Activated CD4-positive, alpha-beta memory T cell treated with anti-CD3 and anti-CD28 coated beads for 36 hours (primary cell): ENCODE measurements at regions of chr1 and their contacts with region 1.

Region 1: DNA sequence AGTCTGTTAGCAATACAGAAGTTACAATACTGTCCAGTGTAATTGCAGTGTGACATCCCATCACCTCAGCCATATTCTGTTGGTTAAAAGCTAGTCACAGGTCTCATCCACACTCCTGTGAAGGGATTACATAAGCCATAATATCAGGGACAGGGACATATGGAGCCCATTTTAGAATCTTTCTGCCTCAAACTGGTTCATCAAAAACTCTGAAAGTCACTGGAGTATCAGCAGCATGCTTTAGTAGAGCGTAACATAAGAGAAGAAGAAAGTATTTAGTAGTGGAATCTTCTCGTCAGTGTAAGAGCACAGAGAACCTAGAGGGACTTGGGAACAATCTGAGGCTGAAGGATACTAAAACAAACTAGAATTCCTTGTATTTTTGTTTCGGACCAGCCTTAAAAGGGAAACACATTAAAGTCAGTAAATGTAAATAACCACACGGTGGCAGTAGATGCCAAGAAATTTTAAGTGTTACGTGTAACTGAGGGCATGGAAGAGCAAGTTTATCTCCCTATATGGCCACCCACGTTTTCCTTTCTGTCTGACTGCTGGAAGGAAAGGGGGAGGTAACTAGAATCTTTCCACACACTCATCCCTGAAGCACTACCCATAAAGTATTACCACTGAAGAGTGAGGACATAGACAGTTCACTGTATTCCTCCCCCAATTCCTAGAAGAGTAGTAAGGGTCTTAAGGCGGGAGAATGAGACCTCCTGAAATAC is 41.6 kb upstream of the AGL start:
- DNase-seq: peak; percentile 22
- H3K4me3 Mint-ChIP-seq: peak overlapping the region; percentile 43
- H3K27ac Mint-ChIP-seq: no peak overlapping the region
- H3K4me1 Mint-ChIP-seq: peaks cover 14% of the 10 kb centered on the region
- H3K27me3 Mint-ChIP-seq: peaks cover 14% of the 10 kb centered on the region

Region 2: DNA sequence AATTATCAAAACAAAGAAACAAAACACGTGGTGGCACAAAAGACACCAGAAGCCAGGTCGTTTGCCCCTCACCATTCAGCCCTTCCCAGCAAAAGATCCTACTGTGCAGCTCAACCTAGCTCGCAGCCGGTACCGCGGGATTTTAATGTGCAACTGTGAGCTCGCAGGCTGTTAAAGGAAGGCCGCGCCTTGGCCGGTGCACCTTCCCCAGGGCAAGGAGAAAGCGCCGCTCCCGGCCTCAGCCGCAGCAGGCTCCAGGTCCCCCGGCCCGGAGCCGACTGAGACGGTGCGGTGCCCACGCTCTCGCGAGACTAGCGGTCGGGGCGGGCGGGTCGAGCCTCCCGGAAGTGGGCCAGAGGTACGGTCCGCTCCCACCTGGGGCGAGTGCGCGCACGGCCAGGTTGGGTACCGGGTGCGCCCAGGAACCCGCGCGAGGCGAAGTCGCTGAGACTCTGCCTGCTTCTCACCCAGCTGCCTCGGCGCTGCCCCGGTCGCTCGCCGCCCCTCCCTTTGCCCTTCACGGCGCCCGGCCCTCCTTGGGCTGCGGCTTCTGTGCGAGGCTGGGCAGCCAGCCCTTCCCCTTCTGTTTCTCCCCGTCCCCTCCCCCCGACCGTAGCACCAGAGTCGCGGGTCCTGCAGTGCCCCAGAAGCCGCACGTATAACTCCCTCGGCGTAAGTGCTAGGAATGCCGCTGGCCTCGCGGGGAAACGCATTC is 41.3 kb after region 1 on chr1 and contains the start of gene AGL:
- CTCF ChIA-PET with region 1: no interaction called
- POLR2A ChIA-PET with region 1: no interaction called
- intact Hi-C with region 1: loop called (anchors 2 kb)
- DNase-seq: peak; percentile 92
- H3K4me3 Mint-ChIP-seq: peak within 1 kb of the TSS; percentile 94
- H3K27ac Mint-ChIP-seq: peak within 1 kb of the TSS; percentile 82
- H3K4me1 Mint-ChIP-seq: peaks cover 27% of the 10 kb centered on the region
- H3K27me3 Mint-ChIP-seq: no peaks in the 10 kb centered on the region
- total RNA-seq, gene AGL: 19.0 to 19.7 TPM

Region 3: GRCh38 chr1:99969729-99970621 is 161.4 kb after region 1 on chr1 and contains the start of gene SLC35A3:
- CTCF ChIA-PET with region 1: no interaction called
- POLR2A ChIA-PET with region 1: no interaction called
- intact Hi-C with region 1: loop called (anchors 5 kb)
- DNase-seq: peak; percentile 88
- H3K4me3 Mint-ChIP-seq: peak within 1 kb of the TSS; percentile 100
- H3K27ac Mint-ChIP-seq: peak within 1 kb of the TSS; percentile 88
- H3K4me1 Mint-ChIP-seq: peaks cover 18% of the 10 kb centered on the region
- H3K27me3 Mint-ChIP-seq: no peaks in the 10 kb centered on the region
- total RNA-seq, gene SLC35A3: 16.5 to 18.3 TPM

Region 4: GRCh38 chr1:99980928-99981327 is 172.4 kb after region 1 on chr1:
- CTCF ChIA-PET with region 1: no interaction called
- POLR2A ChIA-PET with region 1: no interaction called
- intact Hi-C with region 1: no loop called
- DNase-seq: no peak
- H3K4me3 Mint-ChIP-seq: no peak overlapping the region
- H3K27ac Mint-ChIP-seq: no peak overlapping the region
- H3K4me1 Mint-ChIP-seq: peaks cover 6% of the 10 kb centered on the region
- H3K27me3 Mint-ChIP-seq: no peaks in the 10 kb centered on the region

Region 5: GRCh38 chr1:100543640-100544039 is 735.1 kb after region 1 on chr1:
- CTCF ChIA-PET with region 1: no interaction called
- POLR2A ChIA-PET with region 1: no interaction called
- intact Hi-C with region 1: loop called (anchors 5 kb)
- DNase-seq: peak; percentile 63
- H3K4me3 Mint-ChIP-seq: no peak overlapping the region
- H3K27ac Mint-ChIP-seq: no peak overlapping the region
- H3K4me1 Mint-ChIP-seq: peaks cover 8% of the 10 kb centered on the region
- H3K27me3 Mint-ChIP-seq: peaks cover 20% of the 10 kb centered on the region